IMR-90 (cell line): ENCODE measurements at regions of chr11 and their contacts with region 1.

Region 1: GRCh38 chr11:119205574-119206510 is at the start of gene CBL:
- DNase-seq: peak; percentile 84
- ATAC-seq: peak; percentile 93
- H3K4me3 ChIP-seq: peak within 1 kb of the TSS; percentile 100
- H3K27ac ChIP-seq: peak within 1 kb of the TSS; percentile 99
- H3K4me1 ChIP-seq: peaks cover 5% of the 10 kb centered on the region
- H3K27me3 ChIP-seq: no peaks in the 10 kb centered on the region
- CTCF ChIP-seq: peak; percentile 86
- POLR2A ChIP-seq: peak; percentile 59; the same call in 1 of the 2 replicates
- RAD21 ChIP-seq: peak; percentile 51
- total RNA-seq, gene CBL: 6.1 and 7.2 TPM in 2 replicates

Region 2: DNA sequence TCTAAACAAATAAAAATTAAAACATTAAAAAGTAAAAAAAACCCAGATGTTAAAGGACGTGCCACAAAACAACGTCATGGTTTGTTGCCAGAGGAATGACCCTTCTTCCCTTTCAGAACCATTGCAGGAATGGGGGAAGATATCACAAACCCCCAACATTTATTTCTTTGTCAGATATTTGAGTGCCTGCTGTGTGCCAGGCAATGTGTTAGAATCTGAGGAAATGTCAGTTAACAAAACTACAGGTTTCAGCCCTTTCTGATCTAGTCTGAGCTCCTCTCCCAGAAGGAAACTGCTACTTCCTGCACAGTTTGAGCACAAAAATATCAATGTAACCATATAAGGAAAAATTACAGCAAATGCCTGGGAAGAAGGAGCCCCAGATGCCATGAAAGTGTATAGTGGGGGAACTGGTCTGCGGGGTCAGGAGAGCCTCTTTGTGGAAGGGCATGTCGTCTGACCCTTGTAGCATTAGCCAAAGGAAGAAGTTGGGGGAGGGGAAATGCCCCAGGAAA is 27.6 kb before region 1 on chr11:
- CTCF ChIA-PET with region 1: no interaction called
- POLR2A ChIA-PET with region 1: interaction called, 12 read pairs
- dilution Hi-C with region 1: no loop called
- in situ Hi-C with region 1: no loop called
- intact Hi-C with region 1: no loop called
- DNase-seq: no peak
- ATAC-seq: 0 out of 2 replicates have a peak, but pooled peaks have one; percentile 47
- H3K4me3 ChIP-seq: no peak overlapping the region
- H3K27ac ChIP-seq: 0 out of 2 replicates have a peak overlapping the region, but pooled peaks have one; percentile 40
- H3K4me1 ChIP-seq: peaks cover 5% of the 10 kb centered on the region
- H3K27me3 ChIP-seq: no peaks in the 10 kb centered on the region
- CTCF ChIP-seq: no peak
- POLR2A ChIP-seq: no peak
- RAD21 ChIP-seq: no peak

Region 3: GRCh38 chr11:119262668-119263351 is 57.0 kb after region 1 on chr11:
- CTCF ChIA-PET with region 1: no interaction called
- POLR2A ChIA-PET with region 1: no interaction called
- dilution Hi-C with region 1: no loop called
- in situ Hi-C with region 1: no loop called
- intact Hi-C with region 1: loop called (anchors 5 kb)
- DNase-seq: peak; percentile 57
- ATAC-seq: no peak
- H3K4me3 ChIP-seq: no peak overlapping the region
- H3K27ac ChIP-seq: no peak overlapping the region
- H3K4me1 ChIP-seq: peaks cover 15% of the 10 kb centered on the region
- H3K27me3 ChIP-seq: no peaks in the 10 kb centered on the region
- CTCF ChIP-seq: peak; percentile 26; the same call in 1 of the 2 replicates
- POLR2A ChIP-seq: no peak
- RAD21 ChIP-seq: no peak

Region 4: GRCh38 chr11:119284344-119285157 is 78.7 kb after region 1 on chr11:
- CTCF ChIA-PET with region 1: interaction called, 8 read pairs
- POLR2A ChIA-PET with region 1: no interaction called
- dilution Hi-C with region 1: no loop called
- in situ Hi-C with region 1: no loop called
- intact Hi-C with region 1: loop called (anchors 1 kb)
- DNase-seq: peak; percentile 47
- ATAC-seq: peak; percentile 80
- H3K4me3 ChIP-seq: no peak overlapping the region
- H3K27ac ChIP-seq: no peak overlapping the region
- H3K4me1 ChIP-seq: no peaks in the 10 kb centered on the region
- H3K27me3 ChIP-seq: no peaks in the 10 kb centered on the region
- CTCF ChIP-seq: peak; percentile 54
- POLR2A ChIP-seq: no peak
- RAD21 ChIP-seq: peak; percentile 61

Region 5: GRCh38 chr11:119323538-119324033 is 117.7 kb after region 1 on chr11:
- CTCF ChIA-PET with region 1: interaction called, 3 read pairs
- POLR2A ChIA-PET with region 1: no interaction called
- dilution Hi-C with region 1: no loop called
- in situ Hi-C with region 1: no loop called
- intact Hi-C with region 1: loop called (anchors 2 kb)
- DNase-seq: peak; percentile 66
- ATAC-seq: no peak
- H3K4me3 ChIP-seq: no peak overlapping the region
- H3K27ac ChIP-seq: no peak overlapping the region
- H3K4me1 ChIP-seq: peaks cover 24% of the 10 kb centered on the region
- H3K27me3 ChIP-seq: no peaks in the 10 kb centered on the region
- CTCF ChIP-seq: peak; percentile 89
- POLR2A ChIP-seq: no peak
- RAD21 ChIP-seq: peak; percentile 81